Panc1 (cell line): ENCODE measurements at regions of chr19 and their contacts with region 1.

Region 1: DNA sequence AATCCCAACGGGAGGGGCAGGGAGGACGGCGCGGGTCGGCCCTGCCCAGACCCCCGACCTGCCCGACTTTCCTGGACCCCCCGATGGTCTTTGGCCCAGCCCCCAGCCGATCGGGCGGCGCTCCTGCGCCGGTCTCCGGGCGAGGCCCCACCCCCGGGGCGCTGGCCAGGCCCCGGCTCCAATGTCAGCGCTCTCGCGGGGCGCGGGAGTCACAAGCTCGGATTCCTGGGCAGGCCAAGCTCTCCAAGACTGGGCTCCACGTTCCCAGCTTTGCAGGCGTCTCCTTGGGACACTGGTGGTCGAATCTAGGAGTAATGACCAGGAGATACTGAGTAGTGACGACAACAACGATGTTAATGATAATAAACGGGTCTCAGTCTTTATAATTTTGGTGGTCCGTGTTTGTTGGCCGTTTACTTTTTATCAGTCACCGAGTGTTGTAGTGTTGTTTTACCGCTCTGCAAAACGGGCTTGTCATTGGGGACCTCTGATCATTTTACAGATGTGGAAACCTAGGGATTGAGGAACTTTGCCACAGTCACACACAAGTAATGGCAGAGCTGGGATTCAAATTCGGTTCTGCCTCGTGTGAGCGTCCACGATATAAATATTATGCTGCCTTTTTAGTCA is 545 bp downstream of the RAD23A start:
- DNase-seq: no peak
- ATAC-seq: peak; percentile 82
- H3K4me3 ChIP-seq: peak overlapping the region; percentile 89 to 91
- H3K27ac ChIP-seq: peak overlapping the region; percentile 98
- H3K4me1 ChIP-seq: peaks cover 15% of the 10 kb centered on the region
- H3K27me3 ChIP-seq: no peaks in the 10 kb centered on the region
- CTCF ChIP-seq: no peak

Region 2: GRCh38 chr19:12956446-12957388 is 10.5 kb after region 1 on chr19 and contains the start of gene GADD45GIP1:
- CTCF ChIA-PET with region 1: no interaction called
- POLR2A ChIA-PET with region 1: no interaction called
- in situ Hi-C with region 1: no loop called
- intact Hi-C with region 1: no loop called
- DNase-seq: no peak
- ATAC-seq: peak; percentile 92
- H3K4me3 ChIP-seq: peak within 1 kb of the TSS; percentile 72 to 78
- H3K27ac ChIP-seq: peak within 1 kb of the TSS; percentile 58
- H3K4me1 ChIP-seq: peaks cover 30% of the 10 kb centered on the region
- H3K27me3 ChIP-seq: no peaks in the 10 kb centered on the region
- CTCF ChIP-seq: no peak
- total RNA-seq, gene GADD45GIP1: 36.7 TPM

Region 3: DNA sequence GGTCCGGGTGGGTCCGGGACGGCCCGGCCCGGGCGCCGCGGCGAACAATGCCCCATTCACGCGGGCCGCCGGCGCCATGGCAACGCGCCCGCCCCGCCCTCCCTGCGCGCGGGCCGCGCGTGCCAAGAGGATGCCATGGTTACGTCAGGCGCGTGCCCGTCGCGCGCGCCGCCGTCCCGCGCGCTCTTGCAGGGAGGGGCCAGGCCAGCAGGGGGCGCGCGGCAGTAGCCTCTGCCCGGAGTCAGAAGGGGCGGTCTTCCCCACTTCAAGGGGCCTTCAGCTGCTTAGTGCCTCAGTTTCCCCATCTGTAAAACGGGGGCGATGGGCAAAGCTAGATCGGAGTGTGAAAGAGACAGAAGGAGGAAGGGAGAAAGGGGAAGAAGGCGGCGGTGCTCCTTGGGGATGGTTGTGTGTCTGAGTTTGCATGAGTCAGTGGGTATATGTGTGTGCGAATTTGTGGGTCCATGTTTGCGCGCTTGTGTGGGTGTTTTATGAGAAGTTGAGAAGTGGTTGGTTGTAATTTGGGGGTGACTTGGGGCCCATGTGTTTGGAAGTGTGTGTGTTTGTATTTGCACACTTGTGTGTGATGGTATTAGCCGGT is 37.4 kb after region 1 on chr19:
- CTCF ChIA-PET with region 1: no interaction called
- POLR2A ChIA-PET with region 1: no interaction called
- in situ Hi-C with region 1: no loop called
- intact Hi-C with region 1: no loop called
- DNase-seq: peak; percentile 12
- ATAC-seq: peak; percentile 83
- H3K4me3 ChIP-seq: peak overlapping the region; percentile 36 to 51
- H3K27ac ChIP-seq: peak overlapping the region; percentile 69; the same call in 1 of the 2 replicates
- H3K4me1 ChIP-seq: peaks cover 12% of the 10 kb centered on the region
- H3K27me3 ChIP-seq: no peaks in the 10 kb centered on the region
- CTCF ChIP-seq: peak; percentile 93

Region 4: GRCh38 chr19:13155472-13156359 is 209.5 kb after region 1 on chr19:
- CTCF ChIA-PET with region 1: no interaction called
- POLR2A ChIA-PET with region 1: interaction called, 11 read pairs
- in situ Hi-C with region 1: no loop called
- intact Hi-C with region 1: no loop called
- DNase-seq: no peak
- ATAC-seq: peak; percentile 28
- H3K4me3 ChIP-seq: peak overlapping the region; percentile 68 to 90
- H3K27ac ChIP-seq: peak overlapping the region; percentile 96
- H3K4me1 ChIP-seq: peaks cover 15% of the 10 kb centered on the region
- H3K27me3 ChIP-seq: no peaks in the 10 kb centered on the region
- CTCF ChIP-seq: no peak